Posterior cingulate gyrus (tissue), 11 donors: ENCODE measurements at regions of chr20 and their contacts with region 1.

Region 1: DNA sequence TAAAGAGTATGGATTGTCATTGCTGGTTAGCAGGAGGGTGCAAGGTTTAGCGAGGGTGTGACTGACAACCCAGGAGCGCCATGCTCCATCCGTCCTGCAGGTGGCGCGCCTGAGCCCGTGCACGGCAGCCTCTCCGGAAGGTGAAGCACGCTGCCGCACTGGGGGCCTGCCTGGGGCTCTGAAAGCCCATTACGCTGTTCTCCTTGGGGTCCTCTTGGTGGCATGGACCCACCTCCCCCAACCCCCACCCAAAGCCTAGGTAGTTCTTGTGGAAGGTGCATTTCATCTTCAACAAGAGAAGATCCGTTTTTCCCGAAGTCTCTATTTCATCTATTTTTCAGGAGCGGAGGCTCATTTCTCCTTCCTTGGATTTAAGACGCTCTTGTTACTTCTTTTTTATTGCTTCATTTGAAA is 197.4 kb upstream of the KCNG1 start:
- DNase-seq: peak in 7 of 10 donors; percentile 14 to 90 (median 50)

Region 2: DNA sequence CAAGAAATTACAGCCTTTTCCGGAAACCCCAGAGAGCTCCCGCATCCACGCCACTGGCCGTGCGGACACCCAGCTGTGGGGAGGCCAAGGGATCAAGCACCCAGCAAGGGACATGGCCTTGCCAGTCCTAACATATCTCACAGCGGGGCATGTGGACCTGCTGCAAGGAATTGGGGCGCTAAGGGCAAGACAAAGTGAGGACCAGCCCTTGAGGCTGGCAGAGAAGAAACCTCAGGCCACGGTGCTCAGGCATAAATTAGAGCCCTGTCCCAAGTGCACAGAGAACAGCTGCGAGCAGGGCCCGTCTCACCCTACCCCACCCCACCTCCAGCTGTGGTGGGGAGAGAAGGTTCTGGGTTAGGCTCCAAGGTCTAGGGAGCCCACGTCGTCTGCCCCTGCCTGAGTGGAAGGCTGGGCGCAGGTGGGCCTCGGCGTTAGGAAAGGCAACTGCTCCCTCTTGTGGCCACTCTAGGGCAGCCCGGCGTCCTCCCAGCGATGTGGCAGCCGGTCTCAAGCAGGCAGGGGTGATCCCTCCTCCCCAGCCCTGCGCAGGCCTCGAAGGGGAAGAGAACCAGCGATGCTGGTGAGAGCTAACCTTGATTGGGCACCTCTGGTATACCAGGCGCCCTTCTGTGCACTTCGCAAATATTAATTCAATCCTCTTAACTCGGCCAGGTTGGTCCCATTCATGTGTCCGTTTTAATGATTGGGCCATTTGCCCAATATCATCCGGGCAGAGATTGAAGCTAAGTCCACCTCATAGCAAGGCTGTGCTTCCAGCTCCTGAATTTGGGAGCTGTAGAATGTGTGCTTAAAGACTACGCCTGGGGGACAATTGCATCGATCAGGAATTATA is 86.4 kb after region 1 on chr20:
- intact Hi-C with region 1: loop called (anchors 2 kb)
- DNase-seq: peak; percentile 69 to 97 (median 85)